ENCODE measurements at regions of chr4 and their contacts with region 1.

Region 1: GRCh38 chr4:75653845-75654503 is 19.2 kb downstream of the G3BP2 start:
- DNase-seq: no peak
- H3K4me3 Mint-ChIP-seq: no peak overlapping the region
- H3K27ac Mint-ChIP-seq: no peak overlapping the region
- H3K4me1 Mint-ChIP-seq: peaks cover 13% of the 10 kb centered on the region
- H3K27me3 Mint-ChIP-seq: no peaks in the 10 kb centered on the region
- CTCF ChIP-seq: peak; percentile 26

Region 2: GRCh38 chr4:75598390-75598789 is 55.6 kb before region 1 on chr4:
- CTCF ChIA-PET with region 1: no interaction called
- intact Hi-C with region 1: no loop called
- DNase-seq: no peak
- H3K4me3 Mint-ChIP-seq: no peak overlapping the region
- H3K27ac Mint-ChIP-seq: no peak overlapping the region
- H3K4me1 Mint-ChIP-seq: no peaks in the 10 kb centered on the region
- H3K27me3 Mint-ChIP-seq: no peaks in the 10 kb centered on the region
- CTCF ChIP-seq: no peak

Region 3: GRCh38 chr4:75724066-75724866 is 70.3 kb after region 1 on chr4 and contains the start of gene USO1:
- CTCF ChIA-PET with region 1: interaction called, 5 read pairs
- intact Hi-C with region 1: loop called (anchors 5 kb)
- DNase-seq: peak; percentile 97
- H3K4me3 Mint-ChIP-seq: peak within 1 kb of the TSS; percentile 91
- H3K27ac Mint-ChIP-seq: peak within 1 kb of the TSS; percentile 96
- H3K4me1 Mint-ChIP-seq: peaks cover 29% of the 10 kb centered on the region
- H3K27me3 Mint-ChIP-seq: no peaks in the 10 kb centered on the region
- CTCF ChIP-seq: peak; percentile 44
- total RNA-seq, gene USO1: 45.2 and 45.4 TPM in 2 replicates

Region 4: GRCh38 chr4:75844151-75844662 is 190.2 kb after region 1 on chr4:
- CTCF ChIA-PET with region 1: no interaction called
- intact Hi-C with region 1: loop called (anchors 10 kb)
- DNase-seq: peak; percentile 18
- H3K4me3 Mint-ChIP-seq: no peak overlapping the region
- H3K27ac Mint-ChIP-seq: peak overlapping the region; percentile 38
- H3K4me1 Mint-ChIP-seq: no peaks in the 10 kb centered on the region
- H3K27me3 Mint-ChIP-seq: no peaks in the 10 kb centered on the region
- CTCF ChIP-seq: no peak

Measured in Calu3 (cell line).